MCF 10A (cell line): ENCODE measurements at regions of chr1 and their contacts with region 1.

Region 1: GRCh38 chr1:9196129-9197040 is 38.2 kb upstream of the H6PD start:
- DNase-seq: peak; percentile 76
- H3K4me3 Mint-ChIP-seq: no peak overlapping the region
- H3K27ac Mint-ChIP-seq: peak overlapping the region; percentile 54
- H3K4me1 Mint-ChIP-seq: peaks cover 46% of the 10 kb centered on the region
- H3K27me3 Mint-ChIP-seq: no peaks in the 10 kb centered on the region
- CTCF ChIP-seq: peak; percentile 79

Region 2: GRCh38 chr1:8962812-8963530 is 233.4 kb before region 1 on chr1:
- CTCF ChIA-PET with region 1: no interaction called
- POLR2A ChIA-PET with region 1: no interaction called
- intact Hi-C with region 1: no loop called
- DNase-seq: peak; percentile 81
- H3K4me3 Mint-ChIP-seq: no peak overlapping the region
- H3K27ac Mint-ChIP-seq: no peak overlapping the region
- H3K4me1 Mint-ChIP-seq: no peaks in the 10 kb centered on the region
- H3K27me3 Mint-ChIP-seq: no peaks in the 10 kb centered on the region
- CTCF ChIP-seq: peak; percentile 44

Region 3: GRCh38 chr1:9110669-9111356 is 85.6 kb before region 1 on chr1:
- CTCF ChIA-PET with region 1: interaction called, 36 read pairs
- POLR2A ChIA-PET with region 1: interaction called, 5 read pairs
- intact Hi-C with region 1: loop called (anchors 1 kb)
- DNase-seq: peak; percentile 99
- H3K4me3 Mint-ChIP-seq: no peak overlapping the region
- H3K27ac Mint-ChIP-seq: no peak overlapping the region
- H3K4me1 Mint-ChIP-seq: peaks cover 41% of the 10 kb centered on the region
- H3K27me3 Mint-ChIP-seq: no peaks in the 10 kb centered on the region
- CTCF ChIP-seq: peak; percentile 92

Region 4: DNA sequence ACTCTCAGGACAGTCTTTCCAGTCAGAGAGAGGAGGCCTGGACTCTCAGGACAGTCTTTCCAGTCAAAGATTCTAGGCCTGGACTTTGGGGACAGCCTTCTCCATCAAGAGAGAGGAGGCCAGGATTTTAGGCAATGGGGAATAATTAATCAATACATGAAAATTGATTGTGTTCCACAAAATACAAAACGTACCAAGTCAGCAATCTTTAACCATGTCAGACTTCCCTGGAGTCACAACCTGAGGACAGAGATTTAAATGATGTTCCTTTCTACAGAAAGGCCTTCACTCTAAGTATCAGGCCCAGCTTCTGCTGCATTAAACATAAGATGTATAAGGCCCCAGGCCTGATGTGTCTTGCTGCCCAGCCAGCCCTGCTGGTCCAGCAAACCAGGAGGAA is 40.5 kb before region 1 on chr1:
- CTCF ChIA-PET with region 1: no interaction called
- POLR2A ChIA-PET with region 1: no interaction called
- intact Hi-C with region 1: no loop called
- DNase-seq: no peak
- H3K4me3 Mint-ChIP-seq: no peak overlapping the region
- H3K27ac Mint-ChIP-seq: no peak overlapping the region
- H3K4me1 Mint-ChIP-seq: no peaks in the 10 kb centered on the region
- H3K27me3 Mint-ChIP-seq: no peaks in the 10 kb centered on the region
- CTCF ChIP-seq: no peak

Region 5: GRCh38 chr1:9181176-9181906 is 15.0 kb before region 1 on chr1:
- CTCF ChIA-PET with region 1: interaction called, 29 read pairs
- POLR2A ChIA-PET with region 1: interaction called, 16 read pairs
- intact Hi-C with region 1: loop called (anchors 1 kb)
- DNase-seq: peak; percentile 75
- H3K4me3 Mint-ChIP-seq: peak overlapping the region; percentile 91
- H3K27ac Mint-ChIP-seq: peak overlapping the region; percentile 93
- H3K4me1 Mint-ChIP-seq: peaks cover 20% of the 10 kb centered on the region
- H3K27me3 Mint-ChIP-seq: no peaks in the 10 kb centered on the region
- CTCF ChIP-seq: peak; percentile 95